Natural killer cell (primary cell): ENCODE measurements at regions of chr5 and their contacts with region 1.

Region 1: DNA sequence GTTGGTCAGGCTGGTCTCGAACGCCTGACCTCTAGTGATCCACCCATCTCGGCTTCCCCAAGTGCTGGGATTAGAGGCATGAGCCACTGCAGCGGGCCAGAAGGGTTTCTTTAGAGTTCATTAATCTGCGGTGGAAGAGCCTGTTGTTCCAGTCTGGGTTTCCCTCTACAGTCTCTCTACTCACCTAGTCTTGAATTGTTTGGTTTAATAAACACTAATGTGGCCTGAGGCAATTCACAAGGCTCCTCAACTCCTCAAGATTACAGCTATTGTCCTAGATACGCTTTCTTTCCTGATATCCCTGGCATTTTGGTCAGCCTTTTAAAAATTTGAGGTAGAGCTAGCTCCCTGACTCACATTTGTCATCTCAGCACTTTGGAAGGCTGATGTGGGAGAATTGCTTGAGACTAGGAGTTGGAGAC is 4.5 kb upstream of the SAR1B start:
- DNase-seq: no peak
- ATAC-seq: no peak
- H3K4me3 ChIP-seq: no peak overlapping the region
- H3K4me3 Mint-ChIP-seq: no peak overlapping the region
- H3K27ac ChIP-seq: no peak overlapping the region
- H3K27ac Mint-ChIP-seq: no peak overlapping the region
- H3K4me1 ChIP-seq: peaks cover 10% of the 10 kb centered on the region
- H3K4me1 Mint-ChIP-seq: no peaks in the 10 kb centered on the region
- H3K27me3 ChIP-seq: no peaks in the 10 kb centered on the region
- H3K27me3 Mint-ChIP-seq: no peaks in the 10 kb centered on the region
- CTCF ChIP-seq: no peak

Region 2: GRCh38 chr5:134365604-134366003 is 271.6 kb before region 1 on chr5:
- intact Hi-C with region 1: loop called (anchors 5 kb)
- DNase-seq: no peak
- ATAC-seq: no peak
- H3K4me3 ChIP-seq: no peak overlapping the region
- H3K4me3 Mint-ChIP-seq: no peak overlapping the region
- H3K27ac ChIP-seq: no peak overlapping the region
- H3K27ac Mint-ChIP-seq: no peak overlapping the region
- H3K4me1 ChIP-seq: peaks cover 18% of the 10 kb centered on the region
- H3K4me1 Mint-ChIP-seq: peaks cover 24 to 31% of the 10 kb centered on the region in 2 donors
- H3K27me3 ChIP-seq: no peaks in the 10 kb centered on the region
- H3K27me3 Mint-ChIP-seq: no peaks in the 10 kb centered on the region
- CTCF ChIP-seq: no peak

Region 3: DNA sequence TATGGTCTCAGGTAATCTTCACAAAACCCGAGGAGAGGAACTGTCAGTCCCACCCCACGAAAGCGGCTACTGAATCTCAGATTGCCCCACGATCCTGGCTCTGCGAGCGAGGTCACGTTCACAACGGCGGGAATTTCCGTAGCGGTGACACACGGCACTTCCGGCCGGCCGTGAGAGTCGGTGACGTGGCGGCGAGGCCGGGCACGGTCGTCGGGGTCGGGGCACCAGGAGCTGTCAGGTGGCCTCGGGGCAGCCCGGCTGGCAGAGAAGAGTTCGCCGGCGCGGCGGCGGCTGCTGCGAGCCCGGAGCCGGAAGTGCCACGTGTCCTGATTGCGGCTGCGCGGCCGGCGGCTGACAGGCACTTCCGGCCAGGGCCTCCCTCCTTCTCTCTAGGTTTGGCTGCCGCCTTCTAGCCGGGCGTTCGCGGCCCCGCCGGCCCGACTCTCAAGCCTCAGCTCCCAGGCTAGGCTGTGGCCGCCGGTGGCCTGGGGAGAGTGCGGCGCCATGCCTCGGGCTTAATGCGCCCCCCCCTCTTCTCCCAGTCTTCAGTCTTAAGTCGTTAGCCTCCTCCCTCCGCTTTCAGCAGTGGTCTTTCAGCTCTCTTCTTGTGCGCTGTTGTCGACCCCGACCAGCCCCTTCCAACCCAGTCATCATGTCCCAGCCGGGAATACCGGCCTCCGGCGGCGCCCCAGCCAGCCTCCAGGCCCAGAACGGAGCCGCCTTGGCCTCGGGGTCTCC is 11.4 kb after region 1 on chr5 and contains the start of gene SEC24A:
- intact Hi-C with region 1: loop called (anchors 1 kb)
- DNase-seq: peak; percentile 91 to 96
- ATAC-seq: peak; percentile 79 to 92 (median 86)
- H3K4me3 ChIP-seq: peak within 1 kb of the TSS; percentile 83
- H3K4me3 Mint-ChIP-seq: peak within 1 kb of the TSS; percentile 98
- H3K27ac ChIP-seq: peak within 1 kb of the TSS; percentile 97
- H3K27ac Mint-ChIP-seq: peak within 1 kb of the TSS; percentile 99
- H3K4me1 ChIP-seq: peaks cover 17% of the 10 kb centered on the region
- H3K4me1 Mint-ChIP-seq: peaks cover 22 to 26% of the 10 kb centered on the region in 2 donors
- H3K27me3 ChIP-seq: no peaks in the 10 kb centered on the region
- H3K27me3 Mint-ChIP-seq: no peaks in the 10 kb centered on the region
- CTCF ChIP-seq: no peak
- total RNA-seq, gene SEC24A: 20.9 to 26.1 (median 25.0) TPM